ENCODE measurements at regions of chr3 and their contacts with region 1.

Region 1: DNA sequence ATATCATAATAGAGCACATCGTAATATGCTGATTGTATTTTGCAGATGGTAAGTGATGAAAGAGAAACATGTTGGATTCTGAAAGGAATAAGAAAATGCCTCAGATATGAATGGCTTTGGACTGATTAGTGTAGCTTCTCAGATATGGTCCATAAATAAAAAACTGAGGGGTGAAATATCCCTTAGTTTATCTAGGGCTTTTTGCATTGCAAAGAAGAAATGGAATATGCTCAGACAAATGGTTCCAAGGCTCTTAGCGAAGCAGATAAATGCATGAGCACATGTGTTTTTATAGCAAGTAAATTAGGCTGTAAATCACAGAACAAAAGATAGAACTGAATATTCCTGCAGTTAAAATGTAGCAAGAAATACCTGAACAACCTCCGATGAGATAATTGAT is 820.9 kb upstream of the GRM7 start:
- DNase-seq: no peak
- H3K4me3 Mint-ChIP-seq: no peak overlapping the region
- H3K27ac Mint-ChIP-seq: no peak overlapping the region
- H3K4me1 Mint-ChIP-seq: no peaks in the 10 kb centered on the region
- H3K27me3 Mint-ChIP-seq: no peaks in the 10 kb centered on the region

Region 2: DNA sequence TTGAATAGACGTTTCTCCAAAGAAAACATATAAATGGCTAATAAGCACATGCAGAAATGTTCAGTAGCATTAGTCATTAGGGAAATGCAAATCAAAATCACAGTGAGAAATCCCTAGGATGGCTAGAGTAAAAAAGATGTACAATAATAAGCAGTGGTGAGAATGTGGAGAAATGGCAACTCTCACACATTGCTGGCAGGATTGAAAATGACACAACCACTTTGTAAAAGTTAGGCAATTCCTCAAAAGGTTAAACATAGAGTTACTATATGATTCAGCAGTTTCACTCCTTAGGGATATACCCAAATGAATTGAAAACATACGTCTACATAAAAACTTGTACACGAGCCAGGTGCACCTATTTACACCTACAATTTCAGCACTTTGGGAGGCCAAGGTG is 1438.1 kb before region 1 on chr3:
- CTCF ChIA-PET with region 1: no interaction called
- intact Hi-C with region 1: no loop called
- DNase-seq: no peak
- H3K4me3 Mint-ChIP-seq: no peak overlapping the region
- H3K27ac Mint-ChIP-seq: no peak overlapping the region
- H3K4me1 Mint-ChIP-seq: peaks cover 12% of the 10 kb centered on the region
- H3K27me3 Mint-ChIP-seq: no peaks in the 10 kb centered on the region

Region 3: GRCh38 chr3:5187156-5187919 is 852.6 kb before region 1 on chr3 and contains the start of gene EDEM1:
- CTCF ChIA-PET with region 1: no interaction called
- intact Hi-C with region 1: no loop called
- DNase-seq: peak; percentile 95
- H3K4me3 Mint-ChIP-seq: peak within 1 kb of the TSS; percentile 96
- H3K27ac Mint-ChIP-seq: peak within 1 kb of the TSS; percentile 99
- H3K4me1 Mint-ChIP-seq: peaks cover 27% of the 10 kb centered on the region
- H3K27me3 Mint-ChIP-seq: no peaks in the 10 kb centered on the region
- total RNA-seq, gene EDEM1: 137 to 138 TPM

Region 4: GRCh38 chr3:5616873-5617272 is 423.1 kb before region 1 on chr3:
- CTCF ChIA-PET with region 1: no interaction called
- intact Hi-C with region 1: loop called (anchors 5 kb)
- DNase-seq: no peak
- H3K4me3 Mint-ChIP-seq: no peak overlapping the region
- H3K27ac Mint-ChIP-seq: no peak overlapping the region
- H3K4me1 Mint-ChIP-seq: no peaks in the 10 kb centered on the region
- H3K27me3 Mint-ChIP-seq: no peaks in the 10 kb centered on the region